Transverse colon (tissue), 4 donors: ENCODE measurements at regions of chr1 and their contacts with region 1.

Region 1: GRCh38 chr1:15810073-15810472 is 2.6 kb upstream of the UQCRHL start:
- DNase-seq: no peak
- H3K4me3 ChIP-seq: no peak overlapping the region
- H3K27ac ChIP-seq: no peak overlapping the region
- H3K4me1 ChIP-seq: no peaks in the 10 kb centered on the region
- H3K27me3 ChIP-seq: no peaks in the 10 kb centered on the region
- CTCF ChIP-seq: no peak
- EP300 ChIP-seq: no peak
- POLR2A ChIP-seq: no peak

Region 2: DNA sequence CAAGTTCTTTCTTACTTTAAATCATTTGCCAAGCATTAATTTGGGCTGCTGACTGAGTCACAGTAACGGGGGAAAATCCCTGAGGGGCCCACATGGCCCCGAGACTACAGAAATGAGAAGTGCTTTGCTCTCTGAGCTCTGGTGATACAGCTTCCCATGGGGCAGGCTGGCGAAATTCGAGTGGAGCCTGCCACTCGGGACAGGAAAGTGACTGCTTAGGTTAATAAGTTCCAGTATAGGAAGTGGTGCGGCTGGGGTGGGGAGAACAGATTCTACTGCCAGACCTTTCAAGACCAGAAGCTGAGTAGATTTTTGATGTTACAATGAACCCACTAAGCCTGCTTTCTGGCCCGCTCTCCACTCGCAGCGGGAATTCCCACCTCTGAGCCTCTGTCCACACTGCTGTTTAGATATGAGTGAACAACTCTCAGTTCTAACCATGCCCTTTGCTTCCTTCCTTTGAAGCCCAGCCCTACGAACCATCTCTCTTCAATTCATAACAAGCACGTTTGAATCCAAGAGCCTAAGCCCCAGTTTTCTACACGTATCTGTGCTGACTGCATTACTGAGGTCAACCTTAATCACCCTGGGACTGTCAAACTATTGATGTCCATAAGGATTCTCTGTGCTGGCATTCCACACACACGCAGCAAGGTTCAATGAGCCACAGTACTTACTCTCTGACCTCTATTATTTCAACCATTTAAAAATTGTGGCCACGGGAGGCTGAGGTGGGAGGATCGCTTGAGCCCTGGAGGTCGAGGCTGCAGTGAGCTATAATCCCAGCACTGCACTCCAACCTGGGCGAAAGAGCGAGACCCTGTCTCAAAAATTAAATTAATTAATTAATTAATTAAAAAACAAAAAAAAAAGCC is 156.2 kb after region 1 on chr1:
- in situ Hi-C with region 1: no loop called
- intact Hi-C with region 1: loop called (anchors 10 kb)
- DNase-seq: peak; percentile 37
- H3K4me3 ChIP-seq: no peak overlapping the region
- H3K27ac ChIP-seq: peak overlapping the region; percentile 9 to 61 (median 32)
- H3K4me1 ChIP-seq: peaks cover 16 to 47% (median 29%) of the 10 kb centered on the region in 4 donors
- H3K27me3 ChIP-seq: no peaks in the 10 kb centered on the region
- CTCF ChIP-seq: no peak
- EP300 ChIP-seq: no peak
- POLR2A ChIP-seq: no peak

Region 3: GRCh38 chr1:15985611-15986297 is 175.7 kb after region 1 on chr1:
- in situ Hi-C with region 1: loop called (anchors 10 to 25 kb)
- intact Hi-C with region 1: loop called (anchors 10 kb)
- DNase-seq: no peak
- H3K4me3 ChIP-seq: no peak overlapping the region
- H3K27ac ChIP-seq: no peak overlapping the region
- H3K4me1 ChIP-seq: no peaks in the 10 kb centered on the region
- H3K27me3 ChIP-seq: no peaks in the 10 kb centered on the region
- CTCF ChIP-seq: no peak
- EP300 ChIP-seq: no peak
- POLR2A ChIP-seq: no peak

Region 4: DNA sequence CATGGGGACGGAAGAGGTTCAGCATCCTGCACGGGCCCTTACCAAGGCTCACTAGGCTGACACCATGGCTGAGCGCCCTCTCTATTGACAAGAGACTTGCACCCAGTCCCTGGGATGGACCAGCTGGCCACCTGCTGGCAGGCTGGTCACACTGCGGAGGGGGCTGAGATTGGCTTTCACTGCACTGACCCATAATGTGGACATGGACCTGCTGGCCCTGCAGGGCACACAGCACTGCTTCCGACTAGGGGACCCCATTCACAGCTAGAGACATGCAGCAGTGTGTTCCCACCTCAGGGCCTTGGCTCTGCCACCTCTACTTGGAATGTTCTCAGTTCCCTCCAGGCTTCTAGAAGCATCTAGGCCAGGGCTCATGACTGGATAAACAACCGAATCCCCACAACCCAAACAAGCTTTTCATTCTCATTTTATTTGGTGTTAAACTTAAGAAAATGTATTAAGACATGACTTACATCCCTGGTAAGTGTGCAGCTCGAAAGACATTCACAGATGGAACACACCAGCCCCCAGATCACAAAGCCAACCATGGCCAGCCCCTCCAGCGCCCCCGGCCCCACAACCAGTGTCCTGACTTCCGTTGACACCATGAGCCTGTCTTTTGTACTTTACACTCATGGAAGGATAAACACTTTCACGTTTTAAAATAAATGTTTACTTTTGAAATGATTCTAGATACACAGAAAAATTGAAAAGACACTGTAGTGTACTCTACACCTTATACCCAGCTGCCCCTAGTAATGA is 184.7 kb after region 1 on chr1:
- in situ Hi-C with region 1: loop called (anchors 10 to 25 kb)
- intact Hi-C with region 1: loop called (anchors 10 kb)
- DNase-seq: peak; percentile 63
- H3K4me3 ChIP-seq: no peak overlapping the region
- H3K27ac ChIP-seq: no peak overlapping the region
- H3K4me1 ChIP-seq: no peaks in the 10 kb centered on the region
- H3K27me3 ChIP-seq: no peaks in the 10 kb centered on the region
- CTCF ChIP-seq: peak; percentile 68 to 83 (median 79)
- EP300 ChIP-seq: no peak
- POLR2A ChIP-seq: no peak

Region 5: DNA sequence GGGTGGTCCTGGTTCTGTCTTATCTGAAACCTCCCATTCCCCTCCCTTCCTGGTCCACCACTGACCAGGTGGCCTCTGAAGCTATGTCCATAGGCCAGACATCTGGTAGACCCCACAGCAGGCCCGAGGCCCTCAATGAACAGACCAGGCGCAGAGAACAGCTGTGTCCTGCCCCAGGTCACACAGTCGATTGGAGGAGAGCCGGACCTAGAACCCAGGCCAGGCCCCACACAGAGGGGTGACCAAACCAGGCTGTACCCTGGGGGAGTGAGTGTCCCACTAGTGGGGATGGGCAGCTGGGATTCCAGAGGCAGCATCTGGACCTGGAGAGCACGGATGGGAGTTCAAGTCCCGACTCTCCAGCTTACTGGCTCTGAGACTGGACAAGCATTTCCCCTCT is 674.9 kb after region 1 on chr1:
- in situ Hi-C with region 1: no loop called
- intact Hi-C with region 1: no loop called
- DNase-seq: no peak
- H3K4me3 ChIP-seq: no peak overlapping the region
- H3K27ac ChIP-seq: no peak overlapping the region
- H3K4me1 ChIP-seq: no peaks in the 10 kb centered on the region
- H3K27me3 ChIP-seq: no peaks in the 10 kb centered on the region
- CTCF ChIP-seq: no peak
- EP300 ChIP-seq: no peak
- POLR2A ChIP-seq: no peak